ENCODE measurements at regions of chr9 and their contacts with region 1.

Region 1: DNA sequence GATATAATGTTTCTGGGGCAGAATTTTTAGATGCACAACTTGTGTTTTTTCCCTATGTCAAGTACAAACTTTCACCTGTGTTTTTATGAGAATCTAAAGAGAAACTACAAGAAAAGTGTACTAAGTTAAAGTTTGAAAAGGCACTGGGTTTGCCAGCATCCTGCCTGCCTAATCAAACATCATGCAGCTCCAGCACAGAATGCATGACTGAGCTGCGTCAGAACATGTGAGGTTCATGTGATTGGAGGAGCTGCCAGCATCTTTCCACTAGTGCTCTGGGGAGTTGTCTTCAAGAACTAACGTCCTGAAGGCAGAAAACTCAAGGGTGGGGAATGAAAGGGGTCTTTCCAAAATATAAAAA is 46.1 kb upstream of the RIC1 start:
- DNase-seq: peak in 7 of 9 donors; percentile 55 to 81 (median 68)
- ATAC-seq: peak; percentile 82
- H3K4me3 ChIP-seq: no peak overlapping the region
- H3K4me3 Mint-ChIP-seq: peak overlapping the region in 7 of 10 donors; percentile 0 to 43 (median 39)
- H3K27ac ChIP-seq: peak overlapping the region; percentile 43
- H3K27ac Mint-ChIP-seq: peak overlapping the region; percentile 48 to 98 (median 86)
- H3K4me1 ChIP-seq: peaks cover 24 to 30% of the 10 kb centered on the region in 2 donors
- H3K4me1 Mint-ChIP-seq: peaks cover 28 to 79% (median 62%) of the 10 kb centered on the region in 7 donors
- H3K27me3 ChIP-seq: no peaks in the 10 kb centered on the region
- H3K27me3 Mint-ChIP-seq: no peaks in the 10 kb centered on the region

Region 2: GRCh38 chr9:5336688-5337087 is 246.1 kb before region 1 on chr9:
- CTCF ChIA-PET with region 1: interaction called, 4 read pairs
- POLR2A ChIA-PET with region 1: no interaction called
- intact Hi-C with region 1: loop called (anchors 10 kb)
- DNase-seq: peak in 7 of 9 donors; percentile 47 to 70 (median 60)
- ATAC-seq: peak; percentile 62
- H3K4me3 ChIP-seq: peak overlapping the region; percentile 27
- H3K4me3 Mint-ChIP-seq: peak overlapping the region; percentile 64 to 87 (median 80)
- H3K27ac ChIP-seq: peak overlapping the region; percentile 64
- H3K27ac Mint-ChIP-seq: peak overlapping the region; percentile 79 to 95 (median 91)
- H3K4me1 ChIP-seq: peaks cover 24 to 28% of the 10 kb centered on the region in 2 donors
- H3K4me1 Mint-ChIP-seq: peaks cover 20 to 64% (median 50%) of the 10 kb centered on the region in 7 donors
- H3K27me3 ChIP-seq: no peaks in the 10 kb centered on the region
- H3K27me3 Mint-ChIP-seq: no peaks in the 10 kb centered on the region

Region 3: GRCh38 chr9:5510360-5510931 is 72.4 kb before region 1 on chr9 and contains the start of gene PDCD1LG2:
- CTCF ChIA-PET with region 1: interaction called, 5 read pairs
- POLR2A ChIA-PET with region 1: interaction called, 3 read pairs
- intact Hi-C with region 1: loop called in 1 of 2 experiments (anchors 1 kb)
- DNase-seq: peak in 1 of 9 donors; percentile 56
- ATAC-seq: peak; percentile 67
- H3K4me3 ChIP-seq: peak within 1 kb of the TSS; percentile 24
- H3K4me3 Mint-ChIP-seq: peak within 1 kb of the TSS; percentile 43 to 91 (median 66)
- H3K27ac ChIP-seq: no peak within 1 kb of the TSS
- H3K27ac Mint-ChIP-seq: peak within 1 kb of the TSS; percentile 63 to 97 (median 82)
- H3K4me1 ChIP-seq: peaks cover 0 to 8% of the 10 kb centered on the region in 2 donors
- H3K4me1 Mint-ChIP-seq: peaks cover 16 to 59% (median 18%) of the 10 kb centered on the region in 7 donors
- H3K27me3 ChIP-seq: no peaks in the 10 kb centered on the region
- H3K27me3 Mint-ChIP-seq: peaks cover 0 to 2% (median 0%) of the 10 kb centered on the region in 5 donors
- total RNA-seq, gene PDCD1LG2: 0.16 to 7.4 (median 0.32) TPM

Region 4: GRCh38 chr9:5557606-5558587 is 24.9 kb before region 1 on chr9:
- CTCF ChIA-PET with region 1: interaction called, 4 read pairs
- POLR2A ChIA-PET with region 1: interaction called, 68 read pairs
- intact Hi-C with region 1: loop called (anchors 1 kb)
- DNase-seq: peak; percentile 20 to 73 (median 61)
- ATAC-seq: peak; percentile 97
- H3K4me3 ChIP-seq: peak overlapping the region; percentile 24
- H3K4me3 Mint-ChIP-seq: peak overlapping the region; percentile 58 to 79 (median 68)
- H3K27ac ChIP-seq: peak overlapping the region; percentile 68
- H3K27ac Mint-ChIP-seq: peak overlapping the region; percentile 87 to 98 (median 94)
- H3K4me1 ChIP-seq: peaks cover 24 to 31% of the 10 kb centered on the region in 2 donors
- H3K4me1 Mint-ChIP-seq: peaks cover 32 to 59% (median 53%) of the 10 kb centered on the region in 7 donors
- H3K27me3 ChIP-seq: no peaks in the 10 kb centered on the region
- H3K27me3 Mint-ChIP-seq: no peaks in the 10 kb centered on the region

Region 5: DNA sequence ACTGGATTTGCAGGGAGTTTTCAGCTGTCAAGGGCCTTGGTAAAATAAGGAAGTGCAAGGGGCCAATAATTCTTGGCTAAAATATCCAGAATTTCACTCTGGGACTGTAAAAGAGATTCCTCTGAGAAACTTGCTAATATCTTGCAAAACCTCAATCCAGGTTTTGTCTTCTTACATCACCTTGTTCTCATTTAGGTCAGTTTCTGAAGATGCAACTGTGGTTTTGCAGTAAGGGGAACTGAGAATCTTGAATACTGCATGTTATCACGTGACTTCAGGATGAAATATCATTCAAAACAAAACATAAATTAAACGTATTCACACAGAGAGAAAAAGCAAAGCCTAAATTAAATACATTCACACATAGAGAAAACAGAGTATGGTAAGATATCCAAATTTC is 11.1 kb after region 1 on chr9:
- CTCF ChIA-PET with region 1: interaction called, 39 read pairs
- POLR2A ChIA-PET with region 1: interaction called, 5 read pairs
- intact Hi-C with region 1: no loop called
- DNase-seq: no peak
- ATAC-seq: no peak
- H3K4me3 ChIP-seq: no peak overlapping the region
- H3K4me3 Mint-ChIP-seq: no peak overlapping the region
- H3K27ac ChIP-seq: no peak overlapping the region
- H3K27ac Mint-ChIP-seq: peak overlapping the region in 2 of 9 donors; percentile 46 to 47
- H3K4me1 ChIP-seq: no peaks in the 10 kb centered on the region
- H3K4me1 Mint-ChIP-seq: peaks cover 4 to 28% (median 11%) of the 10 kb centered on the region in 7 donors
- H3K27me3 ChIP-seq: no peaks in the 10 kb centered on the region
- H3K27me3 Mint-ChIP-seq: peaks cover 0 to 7% (median 0%) of the 10 kb centered on the region in 5 donors

Region 6: DNA sequence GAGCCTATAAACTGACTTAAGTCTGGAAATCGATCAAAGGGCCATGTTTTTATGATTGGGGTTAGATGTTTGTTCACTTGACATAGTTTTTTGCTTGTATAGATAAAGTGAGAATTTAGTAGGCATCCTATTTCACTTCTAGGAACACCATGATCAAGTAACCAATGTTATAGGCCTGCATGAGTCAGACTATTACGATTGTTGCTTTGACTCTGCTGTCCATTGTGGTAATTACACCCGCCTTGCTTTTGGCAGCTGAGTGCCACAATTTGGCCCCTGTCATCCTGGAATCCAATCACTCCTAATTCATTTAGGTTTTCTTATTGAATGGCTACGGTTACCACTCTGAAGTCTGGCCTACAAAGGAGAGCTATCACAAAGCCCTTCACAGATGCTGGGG is 565.0 kb after region 1 on chr9:
- CTCF ChIA-PET with region 1: no interaction called
- POLR2A ChIA-PET with region 1: no interaction called
- intact Hi-C with region 1: no loop called
- DNase-seq: no peak
- ATAC-seq: no peak
- H3K4me3 ChIP-seq: no peak overlapping the region
- H3K4me3 Mint-ChIP-seq: no peak overlapping the region
- H3K27ac ChIP-seq: no peak overlapping the region
- H3K27ac Mint-ChIP-seq: no peak overlapping the region
- H3K4me1 ChIP-seq: no peaks in the 10 kb centered on the region
- H3K4me1 Mint-ChIP-seq: no peaks in the 10 kb centered on the region
- H3K27me3 ChIP-seq: no peaks in the 10 kb centered on the region
- H3K27me3 Mint-ChIP-seq: peaks cover 0 to 25% (median 14%) of the 10 kb centered on the region in 5 donors

Measured in naive thymus-derived CD4-positive, alpha-beta T cell (primary cell).